GM12878 (cell line): ENCODE measurements at regions of chr10 and their contacts with region 1.

Region 1: DNA sequence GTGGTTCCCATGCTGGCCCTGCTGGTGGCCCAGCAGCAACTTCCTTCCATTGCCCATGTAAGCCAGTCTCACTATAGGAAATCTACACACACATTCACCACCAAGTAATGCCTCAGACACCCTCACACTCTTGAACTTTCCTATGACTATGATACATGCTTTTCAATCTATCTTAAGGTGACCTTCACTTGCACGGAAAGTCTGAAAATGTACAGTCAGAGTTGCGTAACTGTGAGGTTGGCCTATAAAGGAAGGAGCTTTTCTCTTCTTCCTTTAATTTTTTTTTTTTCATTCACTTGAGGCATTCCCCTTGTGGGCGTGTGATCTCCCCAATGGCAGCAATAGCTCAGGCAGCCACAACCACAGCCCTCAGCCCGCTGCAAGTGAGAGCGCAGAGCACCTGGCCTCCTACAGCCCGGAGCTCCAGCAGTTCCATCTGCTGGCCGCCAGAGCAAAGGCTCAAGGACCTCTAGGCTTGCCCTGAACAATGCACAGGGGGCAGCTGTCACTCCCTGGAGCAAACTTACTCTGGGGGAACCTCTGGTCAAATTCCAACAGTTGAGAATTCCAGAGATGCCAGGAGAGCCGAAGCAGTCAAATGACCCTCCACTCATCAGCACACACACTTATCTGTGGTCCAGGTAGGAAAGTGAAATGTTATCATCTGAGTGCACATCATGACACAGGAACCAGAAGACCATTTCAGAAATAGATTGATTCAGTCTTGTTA is 123.1 kb upstream of the ADO start:
- DNase-seq: peak; percentile 90
- ATAC-seq: peak; percentile 98
- H3K4me3 ChIP-seq: no peak overlapping the region
- H3K27ac ChIP-seq: peak overlapping the region; percentile 65
- H3K4me1 ChIP-seq: peaks cover 33% of the 10 kb centered on the region
- H3K27me3 ChIP-seq: no peaks in the 10 kb centered on the region
- CTCF ChIP-seq: peak; percentile 71 to 82 (median 77)
- EP300 ChIP-seq: peak; percentile 91 to 96
- POLR2A ChIP-seq: no peak
- RAD21 ChIP-seq: peak; percentile 82

Region 2: DNA sequence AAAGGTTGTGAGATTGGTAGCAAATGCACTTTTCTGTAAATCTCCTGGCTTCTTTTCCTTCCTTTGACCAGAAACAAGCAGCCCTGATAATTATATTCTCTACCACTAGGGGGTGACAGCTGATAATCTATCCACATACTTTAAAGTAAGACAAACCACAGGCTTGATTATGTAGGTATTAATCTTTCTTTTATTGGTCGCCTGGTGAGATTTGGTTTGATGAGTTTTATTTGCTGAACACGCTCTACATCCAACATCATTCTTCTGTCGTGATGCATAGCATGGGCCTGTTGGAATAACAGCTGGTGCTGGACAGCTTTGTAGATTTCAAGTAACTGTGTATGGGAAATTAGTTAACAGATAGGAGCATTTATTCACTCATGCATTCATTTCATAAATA is 243.7 kb before region 1 on chr10:
- CTCF ChIA-PET with region 1: interaction called, 3 read pairs
- POLR2A ChIA-PET with region 1: no interaction called
- RAD21 ChIA-PET with region 1: no interaction called
- SMC1A ChIA-PET with region 1: no interaction called
- in situ Hi-C with region 1: no loop called
- intact Hi-C with region 1: loop called (anchors 10 kb)
- DNase-seq: no peak
- ATAC-seq: peak; percentile 81
- H3K4me3 ChIP-seq: no peak overlapping the region
- H3K27ac ChIP-seq: no peak overlapping the region
- H3K4me1 ChIP-seq: peaks cover 6% of the 10 kb centered on the region; the same call in 1 of the 2 replicates
- H3K27me3 ChIP-seq: no peaks in the 10 kb centered on the region; a peak in 1 of 4 replicates
- CTCF ChIP-seq: peak; percentile 54 to 77 (median 68); a peak in 5 of 6 replicates
- EP300 ChIP-seq: no peak
- POLR2A ChIP-seq: no peak
- RAD21 ChIP-seq: peak; percentile 94

Region 3: DNA sequence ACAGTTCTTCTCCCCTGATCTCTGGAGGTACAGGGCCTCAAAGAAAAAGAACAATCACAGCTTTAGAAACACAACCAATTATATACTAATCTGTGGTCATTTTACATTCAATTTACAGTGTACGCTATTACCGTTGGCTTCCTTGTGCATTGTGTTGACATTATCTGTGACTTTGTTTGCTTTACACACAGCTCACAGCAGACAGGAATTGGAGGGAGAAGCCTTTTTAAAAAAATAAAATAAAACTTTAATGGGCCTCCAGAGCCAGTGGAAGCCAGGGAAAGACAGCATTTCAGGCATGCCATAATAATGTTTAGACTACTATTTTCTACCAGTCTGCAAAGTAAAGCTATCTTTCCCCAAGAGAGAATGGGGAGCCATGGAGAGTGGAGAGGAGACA is 55.9 kb before region 1 on chr10:
- CTCF ChIA-PET with region 1: interaction called, 45 read pairs
- POLR2A ChIA-PET with region 1: interaction called, 11 read pairs
- RAD21 ChIA-PET with region 1: interaction called, 4 read pairs
- SMC1A ChIA-PET with region 1: interaction called, 13 read pairs
- in situ Hi-C with region 1: no loop called
- intact Hi-C with region 1: no loop called
- DNase-seq: no peak
- ATAC-seq: no peak
- H3K4me3 ChIP-seq: no peak overlapping the region
- H3K27ac ChIP-seq: no peak overlapping the region
- H3K4me1 ChIP-seq: peaks cover 3% of the 10 kb centered on the region
- H3K27me3 ChIP-seq: no peaks in the 10 kb centered on the region
- CTCF ChIP-seq: no peak
- EP300 ChIP-seq: no peak
- POLR2A ChIP-seq: no peak
- RAD21 ChIP-seq: no peak

Region 4: DNA sequence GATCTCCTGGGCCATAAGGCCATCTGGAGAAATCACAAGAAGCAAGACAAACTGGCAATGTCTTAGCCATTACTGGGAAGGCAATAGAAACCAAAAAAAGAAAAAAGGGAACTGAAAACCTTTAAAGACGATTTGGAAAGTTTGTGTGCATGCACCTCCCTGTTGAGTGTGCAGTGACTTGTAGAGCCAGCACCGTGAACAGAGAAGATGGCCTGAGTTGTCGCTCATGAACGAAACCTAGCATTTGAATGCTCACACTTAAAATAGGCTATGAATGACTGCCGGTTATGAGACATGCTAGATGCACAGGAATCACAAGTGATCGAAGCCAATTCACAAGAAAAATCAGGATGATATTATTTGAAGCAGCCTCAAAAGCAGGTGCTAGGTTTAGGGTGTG is 28.1 kb before region 1 on chr10:
- CTCF ChIA-PET with region 1: interaction called, 41 read pairs
- POLR2A ChIA-PET with region 1: interaction called, 9 read pairs
- RAD21 ChIA-PET with region 1: interaction called, 73 read pairs
- SMC1A ChIA-PET with region 1: interaction called, 85 read pairs
- in situ Hi-C with region 1: no loop called
- intact Hi-C with region 1: loop called (anchors 1 kb)
- DNase-seq: peak; percentile 97
- ATAC-seq: peak; percentile 85
- H3K4me3 ChIP-seq: no peak overlapping the region
- H3K27ac ChIP-seq: peak overlapping the region; percentile 90
- H3K4me1 ChIP-seq: peaks cover 50% of the 10 kb centered on the region
- H3K27me3 ChIP-seq: no peaks in the 10 kb centered on the region
- CTCF ChIP-seq: no peak
- EP300 ChIP-seq: peak; percentile 99
- POLR2A ChIP-seq: no peak
- RAD21 ChIP-seq: peak; percentile 45; the same call in 1 of the 2 replicates

Region 5: GRCh38 chr10:62707810-62708209 is 26.4 kb after region 1 on chr10:
- CTCF ChIA-PET with region 1: interaction called, 5 read pairs
- POLR2A ChIA-PET with region 1: interaction called, 5 read pairs
- RAD21 ChIA-PET with region 1: interaction called, 23 read pairs
- SMC1A ChIA-PET with region 1: interaction called, 57 read pairs
- in situ Hi-C with region 1: no loop called
- intact Hi-C with region 1: no loop called
- DNase-seq: peak; percentile 40
- ATAC-seq: peak; percentile 76
- H3K4me3 ChIP-seq: peak overlapping the region; percentile 9; the same call in 1 of the 2 replicates
- H3K27ac ChIP-seq: peak overlapping the region; percentile 61; the same call in 1 of the 2 replicates
- H3K4me1 ChIP-seq: peaks cover 30% of the 10 kb centered on the region
- H3K27me3 ChIP-seq: no peaks in the 10 kb centered on the region
- CTCF ChIP-seq: no peak
- EP300 ChIP-seq: peak; percentile 9 to 76; a peak in 2 of 4 replicates
- POLR2A ChIP-seq: no peak
- RAD21 ChIP-seq: 0 out of 2 replicates have a peak, but pooled peaks have one; percentile 20

Region 6: GRCh38 chr10:62769574-62770242 is 88.3 kb after region 1 on chr10:
- CTCF ChIA-PET with region 1: interaction called, 5 read pairs
- POLR2A ChIA-PET with region 1: no interaction called
- RAD21 ChIA-PET with region 1: interaction called, 5 read pairs
- SMC1A ChIA-PET with region 1: interaction called, 10 read pairs
- in situ Hi-C with region 1: no loop called
- intact Hi-C with region 1: no loop called
- DNase-seq: no peak
- ATAC-seq: peak; percentile 87
- H3K4me3 ChIP-seq: no peak overlapping the region
- H3K27ac ChIP-seq: peak overlapping the region; percentile 56
- H3K4me1 ChIP-seq: peaks cover 31% of the 10 kb centered on the region
- H3K27me3 ChIP-seq: no peaks in the 10 kb centered on the region
- CTCF ChIP-seq: no peak
- EP300 ChIP-seq: no peak
- POLR2A ChIP-seq: no peak
- RAD21 ChIP-seq: no peak

Region 7: DNA sequence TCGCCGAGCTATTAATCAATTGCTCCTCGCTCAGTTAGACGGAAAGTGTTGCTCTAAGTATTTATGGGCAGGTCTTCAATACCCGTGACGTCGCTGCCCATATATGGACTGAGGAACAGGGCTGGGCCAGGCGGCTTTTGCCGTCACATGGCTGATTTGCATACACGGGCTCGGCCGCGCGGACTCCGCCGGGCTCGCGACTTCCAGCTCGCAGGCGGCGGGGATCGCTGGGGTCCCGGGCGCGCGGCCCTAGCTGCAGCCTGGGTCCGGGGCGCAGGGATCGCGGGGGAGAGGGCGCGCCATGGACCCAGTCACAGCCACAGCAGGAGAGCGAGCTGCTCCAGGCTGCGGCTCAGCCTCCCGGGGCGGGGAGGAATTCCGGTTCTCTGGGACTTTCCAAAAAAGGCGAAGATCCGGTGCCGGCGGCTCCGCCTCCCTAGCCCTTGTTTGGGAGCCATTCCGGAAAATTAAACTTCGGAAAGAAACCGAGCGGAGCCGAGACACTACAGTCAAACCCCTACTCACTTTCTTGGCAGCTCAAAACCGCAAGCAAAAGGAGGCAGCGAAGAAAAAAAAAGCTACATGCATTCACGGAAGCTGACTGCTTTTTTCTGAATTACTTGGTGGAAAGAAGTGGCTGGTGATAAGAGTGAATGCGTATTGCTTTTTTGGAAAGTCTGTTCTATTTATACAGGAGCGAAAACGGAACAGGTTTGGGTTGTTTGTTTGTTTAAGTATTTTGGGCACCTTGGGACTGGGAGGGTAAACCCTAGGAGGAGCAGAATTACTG is 135.2 kb after region 1 on chr10 and contains the start of gene EGR2:
- CTCF ChIA-PET with region 1: interaction called, 25 read pairs
- POLR2A ChIA-PET with region 1: interaction called, 11 read pairs
- RAD21 ChIA-PET with region 1: interaction called, 67 read pairs
- SMC1A ChIA-PET with region 1: interaction called, 49 read pairs
- in situ Hi-C with region 1: no loop called
- intact Hi-C with region 1: loop called (anchors 1 kb)
- DNase-seq: peak; percentile 92
- ATAC-seq: peak; percentile 78
- H3K4me3 ChIP-seq: peak within 1 kb of the TSS; percentile 72
- H3K27ac ChIP-seq: peak within 1 kb of the TSS; percentile 72
- H3K4me1 ChIP-seq: peaks cover 19% of the 10 kb centered on the region
- H3K27me3 ChIP-seq: peaks cover 1 to 8% of the 10 kb centered on the region in 2 experiments; a peak in 3 of 4 replicates
- CTCF ChIP-seq: no peak
- EP300 ChIP-seq: peak in 1 of 2 experiments; percentile 56; a peak in 3 of 4 replicates
- POLR2A ChIP-seq: peak; percentile 44
- RAD21 ChIP-seq: no peak
- polyA plus RNA-seq, gene EGR2: 8.3 to 14.0 TPM

Region 8: GRCh38 chr10:62946278-62946677 is 264.9 kb after region 1 on chr10:
- CTCF ChIA-PET with region 1: no interaction called
- POLR2A ChIA-PET with region 1: no interaction called
- RAD21 ChIA-PET with region 1: no interaction called
- SMC1A ChIA-PET with region 1: no interaction called
- in situ Hi-C with region 1: no loop called
- intact Hi-C with region 1: no loop called
- DNase-seq: no peak
- ATAC-seq: no peak
- H3K4me3 ChIP-seq: no peak overlapping the region
- H3K27ac ChIP-seq: no peak overlapping the region
- H3K4me1 ChIP-seq: no peaks in the 10 kb centered on the region
- H3K27me3 ChIP-seq: no peaks in the 10 kb centered on the region
- CTCF ChIP-seq: no peak
- EP300 ChIP-seq: no peak
- POLR2A ChIP-seq: no peak
- RAD21 ChIP-seq: no peak